Activated B cell treated with CpG ODN at 0.5 μM for 24 hours (primary cell): ENCODE measurements at regions of chr12 and their contacts with region 1.

Region 1: DNA sequence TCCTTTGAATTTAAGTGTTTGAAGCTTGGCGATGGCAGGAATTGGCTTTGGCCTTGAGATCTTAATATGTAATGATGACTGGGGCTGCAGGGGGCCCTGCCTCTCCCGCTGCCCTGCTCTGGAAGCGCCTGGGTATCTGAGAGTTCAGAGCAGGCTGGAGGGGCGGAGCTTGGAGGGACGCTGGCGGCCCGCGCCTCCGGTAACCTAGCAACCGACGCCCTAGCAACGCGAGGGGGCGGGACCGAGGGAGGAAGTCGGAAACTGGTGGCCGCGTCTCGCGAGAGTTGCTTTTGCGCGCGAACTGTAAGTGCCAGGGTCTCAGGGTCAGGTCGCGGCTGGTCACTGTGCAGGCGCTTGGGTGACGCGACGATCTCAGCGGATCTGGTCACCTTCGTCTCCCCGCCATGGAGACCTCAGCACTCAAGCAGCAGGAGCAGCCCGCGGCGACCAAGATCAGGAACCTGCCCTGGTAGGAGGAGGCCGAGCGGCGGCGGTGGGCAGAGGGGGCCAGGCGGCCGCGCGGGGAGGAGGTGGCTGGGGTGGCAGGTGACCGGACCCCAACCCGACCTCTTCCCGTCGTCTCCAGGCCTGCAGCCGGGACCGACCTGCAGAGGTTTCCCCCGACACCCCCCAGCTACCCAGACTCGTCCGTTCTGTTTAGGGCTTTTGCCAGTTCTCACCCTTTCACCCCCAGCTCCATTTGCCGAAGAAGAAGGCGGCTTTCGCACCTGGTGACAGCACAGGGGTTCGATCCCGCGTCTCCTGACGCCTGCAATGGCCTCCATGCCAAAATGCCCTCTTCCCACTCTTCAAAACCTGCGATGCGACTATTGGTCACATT is at the start of gene RFC5:
- DNase-seq: peak; percentile 97
- ATAC-seq: peak; percentile 97
- H3K4me3 Mint-ChIP-seq: peak within 1 kb of the TSS; percentile 89
- H3K27ac Mint-ChIP-seq: peak within 1 kb of the TSS; percentile 76
- H3K4me1 Mint-ChIP-seq: peaks cover 20% of the 10 kb centered on the region
- H3K27me3 Mint-ChIP-seq: no peaks in the 10 kb centered on the region
- CTCF ChIP-seq: no peak
- total RNA-seq, gene RFC5: 17.5 and 20.1 TPM in 2 replicates

Region 2: DNA sequence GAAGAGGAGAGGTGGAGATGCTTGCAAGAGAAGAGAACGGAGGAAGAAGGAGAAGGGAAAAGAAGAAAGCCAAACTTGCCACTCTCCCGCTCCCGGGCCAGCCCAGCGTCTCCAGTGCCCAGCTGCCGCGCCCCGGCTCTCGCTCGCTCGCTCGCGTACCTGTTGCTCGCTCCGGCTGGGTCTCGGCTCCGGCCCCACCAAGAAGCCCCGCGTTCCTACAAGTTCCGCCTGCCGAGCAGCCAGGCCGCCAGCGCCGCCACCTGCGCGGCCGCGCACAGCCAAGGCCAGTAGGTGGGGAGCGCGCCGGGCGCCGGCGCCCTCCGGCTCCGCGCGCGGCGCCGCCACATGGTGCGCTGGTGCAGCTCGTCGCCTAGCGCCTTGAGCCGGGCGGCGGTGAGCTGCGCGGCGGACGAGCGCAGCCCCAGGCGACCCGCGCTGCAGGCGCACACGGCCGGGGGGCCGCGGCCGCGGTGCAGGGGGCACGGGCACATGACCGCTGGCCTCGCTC is 1135.8 kb before region 1 on chr12:
- CTCF ChIA-PET with region 1: no interaction called
- POLR2A ChIA-PET with region 1: no interaction called
- intact Hi-C with region 1: loop called (anchors 5 kb)
- DNase-seq: peak; percentile 53
- ATAC-seq: peak; percentile 80
- H3K4me3 Mint-ChIP-seq: peak overlapping the region; percentile 85
- H3K27ac Mint-ChIP-seq: peak overlapping the region; percentile 77
- H3K4me1 Mint-ChIP-seq: peaks cover 45% of the 10 kb centered on the region
- H3K27me3 Mint-ChIP-seq: peaks cover 35% of the 10 kb centered on the region
- CTCF ChIP-seq: no peak

Region 3: DNA sequence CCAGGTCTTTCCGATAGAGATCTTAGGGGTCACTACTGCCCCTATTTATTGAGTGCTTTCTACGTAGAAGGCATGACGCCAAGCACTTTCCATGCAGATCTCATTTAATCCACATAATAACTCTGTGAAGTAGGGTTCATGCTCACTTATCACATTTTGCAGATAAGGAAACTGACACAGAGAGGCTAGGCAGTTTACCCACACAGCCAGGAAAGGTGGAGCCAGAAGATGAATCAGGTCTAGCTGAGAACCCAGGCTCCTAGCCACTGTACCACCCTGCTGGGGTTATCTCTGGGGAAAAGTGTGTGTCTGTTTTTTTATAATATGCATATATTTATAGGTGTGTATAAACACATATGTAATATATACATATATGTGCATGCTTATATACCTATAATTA is 131.4 kb before region 1 on chr12:
- CTCF ChIA-PET with region 1: no interaction called
- POLR2A ChIA-PET with region 1: no interaction called
- intact Hi-C with region 1: no loop called
- DNase-seq: no peak
- ATAC-seq: no peak
- H3K4me3 Mint-ChIP-seq: no peak overlapping the region
- H3K27ac Mint-ChIP-seq: no peak overlapping the region
- H3K4me1 Mint-ChIP-seq: peaks cover 8% of the 10 kb centered on the region
- H3K27me3 Mint-ChIP-seq: peaks cover 8% of the 10 kb centered on the region
- CTCF ChIP-seq: no peak

Region 4: DNA sequence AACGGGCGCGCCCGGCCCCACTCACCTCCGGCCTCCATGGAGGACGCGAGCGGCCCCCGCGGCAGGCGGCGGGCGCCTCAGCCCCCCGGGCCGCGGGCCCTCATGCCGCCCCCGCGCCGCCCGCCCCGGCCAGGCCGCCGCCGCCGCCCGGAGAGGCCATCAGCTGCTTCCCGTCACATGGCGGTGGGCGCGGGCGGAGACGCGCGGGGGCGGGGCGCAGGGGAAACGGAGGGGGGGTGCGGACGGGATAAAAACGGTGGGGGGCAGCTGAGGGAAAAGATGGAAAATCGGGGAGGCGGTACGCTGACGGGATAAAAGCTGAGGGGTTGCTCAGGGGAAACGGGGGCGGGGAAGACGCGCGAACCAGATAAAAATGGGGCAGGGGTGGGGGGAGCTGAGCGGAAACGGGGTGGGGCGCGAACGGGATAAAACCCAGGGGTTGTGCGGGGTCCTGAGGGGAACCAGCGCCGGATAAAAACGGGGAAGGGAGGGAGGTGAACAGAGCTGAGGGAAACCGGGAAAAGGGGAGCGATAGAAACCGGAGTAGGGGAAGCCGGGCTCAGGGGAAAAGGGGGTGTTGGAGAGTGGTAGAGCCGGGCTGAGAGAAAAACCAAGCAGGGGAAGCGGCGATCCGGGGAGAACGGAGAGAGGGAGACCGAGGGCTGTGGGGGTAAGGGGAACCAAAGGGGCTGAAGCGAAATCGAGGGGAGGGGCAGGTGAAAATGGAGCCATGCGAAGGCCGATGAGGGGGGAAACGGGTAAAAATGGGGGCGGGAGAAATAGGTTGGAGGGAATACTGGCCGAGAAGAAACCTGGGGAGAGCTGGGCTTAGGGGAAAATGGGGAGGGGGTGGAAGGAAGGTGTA is 44.6 kb after region 1 on chr12 and contains the start of gene WSB2:
- CTCF ChIA-PET with region 1: interaction called, 3 read pairs
- POLR2A ChIA-PET with region 1: interaction called, 6 read pairs
- intact Hi-C with region 1: loop called (anchors 1 kb)
- DNase-seq: peak; percentile 63
- ATAC-seq: peak; percentile 46
- H3K4me3 Mint-ChIP-seq: peak within 1 kb of the TSS; percentile 86
- H3K27ac Mint-ChIP-seq: peak within 1 kb of the TSS; percentile 88
- H3K4me1 Mint-ChIP-seq: peaks cover 46% of the 10 kb centered on the region
- H3K27me3 Mint-ChIP-seq: no peaks in the 10 kb centered on the region
- CTCF ChIP-seq: no peak
- total RNA-seq, gene WSB2: 28.4 and 29.2 TPM in 2 replicates

Region 5: GRCh38 chr12:118135788-118136558 is 119.3 kb after region 1 on chr12 and contains the start of gene PEBP1:
- CTCF ChIA-PET with region 1: no interaction called
- POLR2A ChIA-PET with region 1: interaction called, 6 read pairs
- intact Hi-C with region 1: loop called (anchors 1 kb)
- DNase-seq: peak; percentile 91
- ATAC-seq: peak; percentile 99
- H3K4me3 Mint-ChIP-seq: peak within 1 kb of the TSS; percentile 98
- H3K27ac Mint-ChIP-seq: peak within 1 kb of the TSS; percentile 86
- H3K4me1 Mint-ChIP-seq: peaks cover 20% of the 10 kb centered on the region
- H3K27me3 Mint-ChIP-seq: no peaks in the 10 kb centered on the region
- CTCF ChIP-seq: no peak
- total RNA-seq, gene PEBP1: 102 and 114 TPM in 2 replicates

Region 6: GRCh38 chr12:119876761-119877638 is 1860.4 kb after region 1 on chr12 and contains the start of gene CIT:
- CTCF ChIA-PET with region 1: no interaction called
- POLR2A ChIA-PET with region 1: no interaction called
- intact Hi-C with region 1: loop called (anchors 10 kb)
- DNase-seq: peak; percentile 72
- ATAC-seq: peak; percentile 100
- H3K4me3 Mint-ChIP-seq: peak within 1 kb of the TSS; percentile 91
- H3K27ac Mint-ChIP-seq: peak within 1 kb of the TSS; percentile 0
- H3K4me1 Mint-ChIP-seq: peaks cover 12% of the 10 kb centered on the region
- H3K27me3 Mint-ChIP-seq: peaks cover 2% of the 10 kb centered on the region
- CTCF ChIP-seq: no peak
- total RNA-seq, gene CIT: 3.6 and 6.1 TPM in 2 replicates